A673 (cell line): ENCODE measurements at regions of chr5 and their contacts with region 1.

Region 1: DNA sequence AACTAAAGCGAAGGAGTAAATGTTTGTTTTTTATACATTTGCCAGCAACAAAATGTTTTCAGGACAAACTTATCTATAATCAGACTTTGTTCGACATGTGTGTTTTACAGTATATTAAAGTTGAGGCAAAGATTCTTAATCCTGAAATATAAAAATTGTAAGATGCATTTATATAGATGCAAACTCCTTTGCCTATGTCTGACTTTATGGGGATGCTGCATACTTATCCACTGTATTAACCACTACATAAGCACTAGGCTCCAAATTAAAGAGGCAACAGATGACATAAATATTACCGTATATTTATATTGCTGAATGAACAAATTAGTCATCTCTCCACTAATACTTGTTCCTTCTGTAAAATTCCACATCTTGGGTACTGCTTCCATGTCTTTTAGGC is 882.7 kb upstream of the ARRDC3 start:
- DNase-seq: peak; percentile 61
- H3K4me3 ChIP-seq: no peak overlapping the region
- H3K27ac ChIP-seq: peak overlapping the region; percentile 76
- H3K4me1 ChIP-seq: peaks cover 36% of the 10 kb centered on the region
- H3K27me3 ChIP-seq: no peaks in the 10 kb centered on the region
- CTCF ChIP-seq: no peak

Region 2: GRCh38 chr5:90916947-90917800 is 1348.6 kb before region 1 on chr5:
- CTCF ChIA-PET with region 1: no interaction called
- POLR2A ChIA-PET with region 1: no interaction called
- intact Hi-C with region 1: no loop called
- DNase-seq: no peak
- H3K4me3 ChIP-seq: no peak overlapping the region
- H3K27ac ChIP-seq: no peak overlapping the region
- H3K4me1 ChIP-seq: peaks cover 9% of the 10 kb centered on the region
- H3K27me3 ChIP-seq: no peaks in the 10 kb centered on the region
- CTCF ChIP-seq: no peak

Region 3: DNA sequence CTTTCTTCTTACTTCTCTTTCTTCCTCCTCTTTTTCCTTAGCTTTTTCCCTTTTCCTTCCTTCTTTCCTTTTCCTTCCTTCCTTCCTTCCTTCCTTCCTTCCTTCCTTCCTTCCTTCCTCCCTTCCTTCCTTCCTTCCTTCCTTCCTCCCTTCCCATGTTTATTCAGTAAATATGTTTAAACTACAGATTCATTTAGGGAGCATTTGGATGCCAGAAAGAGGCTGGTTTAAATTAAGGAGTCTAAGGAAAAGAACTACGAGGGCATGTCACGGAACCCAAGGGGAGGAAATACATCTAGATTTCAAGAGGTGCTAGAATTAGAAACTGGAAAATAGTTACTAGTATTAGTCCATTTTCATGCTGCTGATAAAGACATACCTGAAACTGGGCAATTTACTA is 562.7 kb before region 1 on chr5:
- CTCF ChIA-PET with region 1: no interaction called
- POLR2A ChIA-PET with region 1: no interaction called
- intact Hi-C with region 1: loop called (anchors 2 kb)
- DNase-seq: peak; percentile 56
- H3K4me3 ChIP-seq: no peak overlapping the region
- H3K27ac ChIP-seq: peak overlapping the region; percentile 22
- H3K4me1 ChIP-seq: peaks cover 2% of the 10 kb centered on the region
- H3K27me3 ChIP-seq: no peaks in the 10 kb centered on the region
- CTCF ChIP-seq: no peak

Region 4: GRCh38 chr5:91875196-91875779 is 390.5 kb before region 1 on chr5:
- CTCF ChIA-PET with region 1: no interaction called
- POLR2A ChIA-PET with region 1: no interaction called
- intact Hi-C with region 1: no loop called
- DNase-seq: no peak
- H3K4me3 ChIP-seq: no peak overlapping the region
- H3K27ac ChIP-seq: no peak overlapping the region
- H3K4me1 ChIP-seq: no peaks in the 10 kb centered on the region
- H3K27me3 ChIP-seq: no peaks in the 10 kb centered on the region
- CTCF ChIP-seq: no peak

Region 5: DNA sequence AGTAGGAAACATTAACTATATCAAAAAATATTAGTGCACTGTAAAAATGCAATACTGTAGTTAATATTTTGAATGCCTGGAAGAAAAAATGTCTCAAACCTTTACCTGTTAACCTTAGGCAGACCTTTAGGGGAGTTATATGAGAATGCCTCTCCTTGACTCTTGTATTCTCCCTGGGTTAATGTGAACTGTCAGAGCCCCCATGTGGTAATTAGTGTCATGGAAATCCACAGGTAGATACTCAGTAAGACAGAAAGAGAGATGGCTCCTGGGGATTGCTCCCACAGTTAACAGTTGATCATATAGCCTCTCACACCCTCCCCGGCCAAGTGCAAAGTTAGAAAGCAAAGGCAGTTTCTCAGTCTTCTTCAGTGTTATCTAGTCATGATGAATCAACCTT is 572.4 kb after region 1 on chr5:
- CTCF ChIA-PET with region 1: no interaction called
- POLR2A ChIA-PET with region 1: no interaction called
- intact Hi-C with region 1: no loop called
- DNase-seq: no peak
- H3K4me3 ChIP-seq: no peak overlapping the region
- H3K27ac ChIP-seq: no peak overlapping the region
- H3K4me1 ChIP-seq: no peaks in the 10 kb centered on the region
- H3K27me3 ChIP-seq: no peaks in the 10 kb centered on the region
- CTCF ChIP-seq: no peak